ENCODE measurements at regions of chr3 and their contacts with region 1.

Region 1: DNA sequence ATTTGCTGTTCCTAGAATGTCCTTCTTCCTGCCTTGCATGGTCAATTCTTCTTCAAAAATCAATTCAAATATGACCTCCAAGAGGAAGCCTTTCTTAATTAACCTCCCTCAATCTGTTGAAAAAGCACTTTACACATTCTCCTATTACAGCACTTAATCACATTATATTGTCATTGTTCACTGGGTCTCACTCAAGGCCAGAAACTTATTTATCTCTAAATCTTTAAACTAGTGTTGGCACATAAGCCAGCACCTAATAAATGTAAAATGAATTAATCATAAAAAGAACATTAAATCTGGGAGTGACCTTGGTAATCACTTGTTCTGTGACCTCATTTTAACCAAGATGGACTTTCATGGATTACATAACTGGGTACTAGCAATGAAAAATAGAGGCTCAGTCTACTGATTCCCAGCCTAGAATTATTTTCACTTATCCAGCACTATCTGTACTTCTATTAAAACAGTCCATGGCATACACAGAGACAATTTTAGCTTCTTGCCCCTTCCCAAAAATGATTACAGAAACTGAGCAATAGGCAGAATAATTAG is 22.1 kb downstream of the MSL2 start:
- DNase-seq: no peak
- ATAC-seq: no peak
- H3K4me3 ChIP-seq: no peak overlapping the region
- H3K4me3 Mint-ChIP-seq: no peak overlapping the region
- H3K27ac ChIP-seq: no peak overlapping the region
- H3K27ac Mint-ChIP-seq: no peak overlapping the region
- H3K4me1 ChIP-seq: peaks cover 45% of the 10 kb centered on the region
- H3K4me1 Mint-ChIP-seq: peaks cover 23 to 26% of the 10 kb centered on the region in 2 donors
- H3K27me3 ChIP-seq: no peaks in the 10 kb centered on the region
- H3K27me3 Mint-ChIP-seq: no peaks in the 10 kb centered on the region
- CTCF ChIP-seq: no peak

Region 2: DNA sequence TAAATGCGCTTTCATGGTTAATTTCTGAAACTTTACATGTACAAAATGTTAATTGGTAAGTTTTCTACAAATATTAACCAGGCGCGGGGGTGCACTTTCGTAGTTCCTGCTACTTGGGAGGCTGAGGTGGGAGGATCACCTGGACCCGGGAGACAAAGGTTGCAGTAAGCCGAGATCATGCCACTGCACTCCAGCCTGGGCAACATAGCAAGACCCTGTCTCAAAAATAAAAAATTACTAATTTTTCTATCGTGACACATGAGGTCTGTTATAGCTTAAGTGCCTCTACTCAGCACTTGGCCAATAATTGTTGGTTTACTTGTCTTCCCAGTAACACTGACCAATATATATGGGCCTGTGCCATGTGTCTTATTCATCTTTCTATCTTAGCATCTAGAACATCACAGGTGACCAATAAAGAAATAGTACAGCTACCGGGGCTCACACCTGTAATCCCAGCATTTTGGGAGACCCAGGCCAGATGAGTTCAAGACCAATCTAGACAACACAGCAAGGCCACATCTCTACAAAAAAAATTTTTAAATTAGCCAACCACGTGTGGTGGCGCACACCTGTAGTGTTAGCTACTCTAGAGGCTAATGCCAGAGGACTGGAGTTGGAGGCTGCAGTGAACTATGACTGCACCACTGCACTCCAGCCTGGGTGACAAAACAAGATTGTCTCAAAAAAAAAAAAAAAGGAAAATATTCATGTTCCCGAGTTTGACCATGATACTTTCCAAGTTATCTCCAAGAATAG is 16.0 kb after region 1 on chr3:
- intact Hi-C with region 1: loop called (anchors 2 kb)
- DNase-seq: no peak
- ATAC-seq: no peak
- H3K4me3 ChIP-seq: no peak overlapping the region
- H3K4me3 Mint-ChIP-seq: peak overlapping the region; percentile 74
- H3K27ac ChIP-seq: no peak overlapping the region
- H3K27ac Mint-ChIP-seq: peak overlapping the region; percentile 98
- H3K4me1 ChIP-seq: peaks cover 57% of the 10 kb centered on the region
- H3K4me1 Mint-ChIP-seq: peaks cover 93% of the 10 kb centered on the region in 2 donors
- H3K27me3 ChIP-seq: no peaks in the 10 kb centered on the region
- H3K27me3 Mint-ChIP-seq: no peaks in the 10 kb centered on the region
- CTCF ChIP-seq: no peak

Region 3: DNA sequence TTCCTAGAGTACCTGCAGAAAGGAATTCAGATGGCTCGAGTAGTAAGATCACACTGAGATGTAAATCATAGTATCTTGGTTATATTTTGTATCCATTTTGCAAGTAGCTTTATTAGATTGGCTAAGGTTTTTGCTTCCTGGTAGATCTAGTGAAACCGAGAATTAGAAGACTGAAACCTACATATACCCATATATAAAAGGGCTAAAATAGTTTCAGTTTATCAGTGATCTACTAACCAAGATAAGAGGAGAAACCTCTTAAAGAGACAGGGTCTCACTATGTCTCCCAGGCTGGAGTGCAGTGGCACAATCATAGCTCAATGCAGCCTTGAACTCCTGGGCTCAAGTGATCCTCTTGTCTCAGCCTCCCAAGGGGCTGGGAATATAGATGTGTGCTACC is 211.4 kb after region 1 on chr3:
- intact Hi-C with region 1: no loop called
- DNase-seq: no peak
- ATAC-seq: no peak
- H3K4me3 ChIP-seq: no peak overlapping the region
- H3K4me3 Mint-ChIP-seq: no peak overlapping the region
- H3K27ac ChIP-seq: no peak overlapping the region
- H3K27ac Mint-ChIP-seq: peak overlapping the region in 1 of 2 donors; percentile 29
- H3K4me1 ChIP-seq: no peaks in the 10 kb centered on the region
- H3K4me1 Mint-ChIP-seq: no peaks in the 10 kb centered on the region
- H3K27me3 ChIP-seq: no peaks in the 10 kb centered on the region
- H3K27me3 Mint-ChIP-seq: no peaks in the 10 kb centered on the region
- CTCF ChIP-seq: no peak